ENCODE measurements at regions of chr4 and their contacts with region 1.

Region 1: DNA sequence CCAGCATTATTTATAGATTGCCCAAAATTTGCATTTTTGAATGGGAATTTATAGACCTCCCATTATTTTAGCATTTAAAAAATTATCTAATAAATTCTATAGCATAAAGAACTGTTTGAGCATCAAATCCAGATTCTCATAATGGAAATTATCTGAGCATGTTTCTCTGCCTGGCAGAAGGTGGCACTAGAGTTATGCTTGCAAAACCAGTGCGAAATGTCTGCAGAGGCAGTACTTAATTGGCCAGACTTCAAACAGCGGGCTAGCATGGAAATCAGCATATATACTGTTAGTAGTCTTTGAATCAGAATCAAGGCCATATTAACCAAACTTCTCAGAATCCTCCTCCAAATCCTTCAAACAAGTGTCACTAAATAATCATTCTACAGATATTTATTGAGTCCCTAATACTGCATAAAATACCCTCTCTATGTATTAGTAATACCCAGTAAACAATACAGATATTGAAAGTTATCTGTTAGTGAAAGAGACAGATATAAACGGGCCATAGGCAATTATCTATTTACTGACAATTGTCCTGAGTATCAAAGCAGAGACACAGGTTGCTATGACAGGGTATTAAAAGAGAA is 78.7 kb upstream of the DCLK2 start:
- DNase-seq: peak; percentile 87
- ATAC-seq: peak; percentile 56
- H3K4me3 ChIP-seq: no peak overlapping the region
- H3K27ac ChIP-seq: no peak overlapping the region
- H3K4me1 ChIP-seq: peaks cover 14% of the 10 kb centered on the region
- H3K27me3 ChIP-seq: no peaks in the 10 kb centered on the region
- CTCF ChIP-seq: peak; percentile 95
- POLR2A ChIP-seq: no peak
- RAD21 ChIP-seq: peak; percentile 96

Region 2: DNA sequence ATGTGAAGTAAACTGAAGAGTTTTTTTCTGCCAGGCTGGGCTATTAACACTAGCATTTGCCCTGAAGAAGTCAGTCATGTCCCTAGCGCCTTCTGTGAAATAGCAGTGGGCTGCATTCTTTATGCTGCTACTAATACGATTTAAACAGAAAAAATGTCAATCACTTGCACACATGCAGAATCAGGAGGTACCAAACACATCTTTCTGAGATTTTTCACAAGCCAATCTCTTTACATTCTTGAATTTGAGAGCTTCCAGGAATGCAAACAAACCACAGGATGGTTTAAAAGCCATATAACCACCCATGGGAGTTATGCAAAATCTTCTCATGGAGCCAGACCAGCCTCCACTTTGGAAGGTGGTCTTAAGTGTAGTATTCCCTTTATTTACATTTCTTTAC is 404.1 kb before region 1 on chr4:
- CTCF ChIA-PET with region 1: no interaction called
- POLR2A ChIA-PET with region 1: no interaction called
- dilution Hi-C with region 1: no loop called
- in situ Hi-C with region 1: no loop called
- intact Hi-C with region 1: no loop called
- DNase-seq: no peak
- ATAC-seq: no peak; the same call in 1 of the 2 replicates
- H3K4me3 ChIP-seq: no peak overlapping the region
- H3K27ac ChIP-seq: no peak overlapping the region
- H3K4me1 ChIP-seq: no peaks in the 10 kb centered on the region
- H3K27me3 ChIP-seq: no peaks in the 10 kb centered on the region
- CTCF ChIP-seq: no peak
- POLR2A ChIP-seq: no peak
- RAD21 ChIP-seq: no peak

Region 3: GRCh38 chr4:150209140-150209829 is 209.7 kb after region 1 on chr4:
- CTCF ChIA-PET with region 1: interaction called, 10 read pairs
- POLR2A ChIA-PET with region 1: no interaction called
- dilution Hi-C with region 1: no loop called
- in situ Hi-C with region 1: no loop called
- intact Hi-C with region 1: loop called (anchors 1 kb)
- DNase-seq: peak; percentile 71
- ATAC-seq: peak; percentile 77
- H3K4me3 ChIP-seq: no peak overlapping the region
- H3K27ac ChIP-seq: no peak overlapping the region
- H3K4me1 ChIP-seq: peaks cover 7% of the 10 kb centered on the region
- H3K27me3 ChIP-seq: no peaks in the 10 kb centered on the region
- CTCF ChIP-seq: peak; percentile 64
- POLR2A ChIP-seq: no peak
- RAD21 ChIP-seq: peak; percentile 73

Region 4: DNA sequence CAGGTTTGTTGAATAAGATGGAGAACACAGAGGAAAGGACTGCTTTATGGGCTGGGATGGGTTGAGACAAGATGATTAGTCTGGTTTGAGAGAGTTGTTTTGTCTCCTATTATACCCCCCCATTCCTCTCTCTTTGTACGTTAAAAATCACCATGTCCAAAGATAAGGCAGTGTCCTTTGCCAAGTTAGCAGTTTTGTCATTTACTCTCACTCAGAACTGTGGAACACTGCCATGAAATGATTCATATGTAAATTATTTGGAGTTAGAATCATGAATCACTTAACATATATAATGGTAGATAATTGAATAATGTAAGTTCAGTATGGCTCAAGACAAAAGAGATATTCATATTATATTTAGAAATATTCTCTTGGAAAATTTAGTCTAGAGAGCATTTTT is 229.9 kb after region 1 on chr4:
- CTCF ChIA-PET with region 1: no interaction called
- POLR2A ChIA-PET with region 1: no interaction called
- dilution Hi-C with region 1: no loop called
- in situ Hi-C with region 1: no loop called
- intact Hi-C with region 1: no loop called
- DNase-seq: peak; percentile 93
- ATAC-seq: 0 out of 2 replicates have a peak, but pooled peaks have one; percentile 1
- H3K4me3 ChIP-seq: no peak overlapping the region
- H3K27ac ChIP-seq: peak overlapping the region; percentile 92
- H3K4me1 ChIP-seq: peaks cover 22% of the 10 kb centered on the region
- H3K27me3 ChIP-seq: no peaks in the 10 kb centered on the region
- CTCF ChIP-seq: no peak
- POLR2A ChIP-seq: no peak
- RAD21 ChIP-seq: no peak

Region 5: GRCh38 chr4:150242820-150243458 is 243.4 kb after region 1 on chr4:
- CTCF ChIA-PET with region 1: interaction called, 26 read pairs
- POLR2A ChIA-PET with region 1: no interaction called
- dilution Hi-C with region 1: no loop called
- in situ Hi-C with region 1: no loop called
- intact Hi-C with region 1: loop called (anchors 2 kb)
- DNase-seq: peak; percentile 60
- ATAC-seq: peak; percentile 66
- H3K4me3 ChIP-seq: no peak overlapping the region
- H3K27ac ChIP-seq: no peak overlapping the region; the same call in 1 of the 2 replicates
- H3K4me1 ChIP-seq: peaks cover 19% of the 10 kb centered on the region
- H3K27me3 ChIP-seq: no peaks in the 10 kb centered on the region
- CTCF ChIP-seq: peak; percentile 86
- POLR2A ChIP-seq: no peak
- RAD21 ChIP-seq: peak; percentile 86

Region 6: GRCh38 chr4:150583287-150584110 is 583.9 kb after region 1 on chr4:
- CTCF ChIA-PET with region 1: no interaction called
- POLR2A ChIA-PET with region 1: no interaction called
- dilution Hi-C with region 1: no loop called
- in situ Hi-C with region 1: loop called (anchors 10 kb)
- intact Hi-C with region 1: loop called (anchors 5 kb)
- DNase-seq: peak; percentile 47
- ATAC-seq: peak; percentile 40
- H3K4me3 ChIP-seq: peak overlapping the region; percentile 78
- H3K27ac ChIP-seq: peak overlapping the region; percentile 94
- H3K4me1 ChIP-seq: 0 out of 2 replicates have a peak, but pooled peaks cover 2% of the 10 kb centered on the region
- H3K27me3 ChIP-seq: no peaks in the 10 kb centered on the region
- CTCF ChIP-seq: no peak
- POLR2A ChIP-seq: no peak
- RAD21 ChIP-seq: no peak

Region 7: DNA sequence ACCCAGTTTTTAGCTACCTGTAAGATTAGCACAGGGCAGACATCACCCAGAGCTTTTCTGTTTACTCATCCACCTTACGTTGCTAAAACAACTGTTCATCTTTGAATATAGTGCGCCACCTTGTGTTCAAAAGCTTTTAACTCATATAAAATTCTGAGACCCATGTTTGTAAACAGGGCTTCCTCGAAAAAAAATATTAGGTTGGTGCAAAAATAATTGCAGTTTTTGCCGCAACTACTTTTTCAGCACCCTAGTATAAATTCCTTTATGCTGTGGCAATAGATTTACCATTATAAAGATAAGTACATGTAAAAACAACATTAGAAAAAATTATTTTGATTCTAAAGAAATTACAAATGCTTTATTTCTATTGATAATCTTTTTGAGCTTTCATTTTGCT is 867.6 kb after region 1 on chr4:
- CTCF ChIA-PET with region 1: interaction called, 4 read pairs
- POLR2A ChIA-PET with region 1: no interaction called
- dilution Hi-C with region 1: no loop called
- in situ Hi-C with region 1: no loop called
- intact Hi-C with region 1: loop called (anchors 2 kb)
- DNase-seq: peak; percentile 81
- ATAC-seq: peak; percentile 72
- H3K4me3 ChIP-seq: no peak overlapping the region
- H3K27ac ChIP-seq: no peak overlapping the region
- H3K4me1 ChIP-seq: no peaks in the 10 kb centered on the region
- H3K27me3 ChIP-seq: no peaks in the 10 kb centered on the region
- CTCF ChIP-seq: peak; percentile 76
- POLR2A ChIP-seq: no peak
- RAD21 ChIP-seq: peak; percentile 77